A673 (cell line): ENCODE measurements at regions of chr11 and their contacts with region 1.

Region 1: GRCh38 chr11:114141863-114142580 is 82.5 kb downstream of the ZBTB16 start:
- DNase-seq: peak; percentile 59
- H3K4me3 ChIP-seq: no peak overlapping the region
- H3K27ac ChIP-seq: peak overlapping the region; percentile 91
- H3K4me1 ChIP-seq: peaks cover 97% of the 10 kb centered on the region
- H3K27me3 ChIP-seq: no peaks in the 10 kb centered on the region
- CTCF ChIP-seq: no peak

Region 2: DNA sequence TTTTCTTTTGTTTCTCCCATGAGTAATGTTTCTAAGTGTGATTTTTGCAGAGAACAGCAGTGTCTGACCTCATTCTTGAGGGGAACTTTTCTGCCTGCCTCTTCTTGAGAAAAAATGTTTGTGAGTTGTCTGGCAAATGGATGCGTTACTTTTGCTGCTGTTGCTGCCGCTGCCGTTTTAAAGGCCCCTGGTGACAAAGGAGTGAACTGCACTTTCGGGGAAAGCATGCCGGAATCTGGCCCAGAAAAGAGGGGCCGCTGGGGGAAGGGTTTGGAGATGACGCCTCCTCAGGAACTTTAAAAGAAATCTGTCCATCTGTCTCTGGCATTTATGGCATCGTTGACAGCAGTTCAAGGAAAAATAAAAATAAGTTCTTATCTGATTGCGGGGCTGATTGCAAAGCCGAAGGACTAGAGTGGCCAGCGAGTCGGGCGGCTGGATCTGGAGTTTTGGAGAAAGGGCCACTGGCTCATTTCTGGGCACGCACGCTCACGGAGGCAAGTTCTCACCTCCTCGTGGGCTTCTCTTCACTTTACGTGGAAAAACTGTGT is 66.1 kb before region 1 on chr11:
- CTCF ChIA-PET with region 1: interaction called, 5 read pairs
- POLR2A ChIA-PET with region 1: no interaction called
- intact Hi-C with region 1: loop called (anchors 2 kb)
- DNase-seq: peak; percentile 88
- H3K4me3 ChIP-seq: no peak overlapping the region
- H3K27ac ChIP-seq: no peak overlapping the region
- H3K4me1 ChIP-seq: peaks cover 85% of the 10 kb centered on the region
- H3K27me3 ChIP-seq: no peaks in the 10 kb centered on the region
- CTCF ChIP-seq: peak; percentile 79